PC-9 (cell line): ENCODE measurements at regions of chr15 and their contacts with region 1.

Region 1: GRCh38 chr15:44738340-44738984 is 2.1 kb downstream of the TRIM69 start:
- DNase-seq: peak in 1 of 2 experiments; percentile 37
- H3K4me3 ChIP-seq: no peak overlapping the region
- H3K27ac ChIP-seq: no peak overlapping the region
- H3K4me1 ChIP-seq: no peaks in the 10 kb centered on the region
- H3K27me3 ChIP-seq: no peaks in the 10 kb centered on the region
- CTCF ChIP-seq: peak; percentile 75

Region 2: GRCh38 chr15:44573386-44573785 is 165.1 kb before region 1 on chr15:
- CTCF ChIA-PET with region 1: no interaction called
- POLR2A ChIA-PET with region 1: no interaction called
- intact Hi-C with region 1: loop called (anchors 1 kb)
- DNase-seq: no peak
- H3K4me3 ChIP-seq: no peak overlapping the region
- H3K27ac ChIP-seq: no peak overlapping the region
- H3K4me1 ChIP-seq: no peaks in the 10 kb centered on the region
- H3K27me3 ChIP-seq: no peaks in the 10 kb centered on the region
- CTCF ChIP-seq: no peak

Region 3: GRCh38 chr15:44584162-44584749 is 154.2 kb before region 1 on chr15:
- CTCF ChIA-PET with region 1: interaction called, 15 read pairs
- POLR2A ChIA-PET with region 1: no interaction called
- intact Hi-C with region 1: no loop called
- DNase-seq: peak; percentile 39 to 54
- H3K4me3 ChIP-seq: no peak overlapping the region
- H3K27ac ChIP-seq: no peak overlapping the region
- H3K4me1 ChIP-seq: peaks cover 11% of the 10 kb centered on the region; the same call in 1 of the 2 replicates
- H3K27me3 ChIP-seq: no peaks in the 10 kb centered on the region
- CTCF ChIP-seq: peak; percentile 51

Region 4: DNA sequence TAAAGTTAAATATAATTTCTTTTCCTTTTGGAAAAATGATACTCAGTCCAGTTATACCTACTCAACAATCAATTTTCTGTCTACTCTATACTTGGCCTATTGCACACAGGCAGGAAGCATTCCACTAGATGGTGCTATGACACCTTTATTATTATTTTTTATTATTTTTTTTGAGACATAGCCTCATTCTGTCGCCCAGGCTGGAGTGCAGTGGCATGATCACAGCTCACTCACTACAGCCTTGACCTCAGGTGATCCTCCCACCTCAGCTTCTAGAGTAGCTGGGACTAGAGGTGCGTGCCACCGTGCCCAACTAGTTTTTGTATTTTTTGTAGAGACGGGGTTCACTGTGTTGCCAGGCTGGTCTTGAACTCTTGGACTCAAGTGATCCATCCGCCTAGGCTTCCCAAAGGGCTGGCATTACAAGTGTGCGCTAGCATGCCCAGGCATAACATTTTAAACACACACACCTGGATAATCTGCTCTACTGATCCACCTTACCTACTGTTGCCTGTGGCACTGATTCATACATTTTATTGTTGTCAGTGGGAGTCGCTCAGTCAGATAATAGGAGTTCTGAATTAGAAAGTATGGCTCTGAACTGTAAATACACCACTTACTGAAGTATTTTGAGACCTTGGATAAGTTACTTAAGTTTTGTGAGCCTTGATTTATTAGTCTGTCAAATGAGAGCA is 145.3 kb before region 1 on chr15:
- CTCF ChIA-PET with region 1: interaction called, 4 read pairs
- POLR2A ChIA-PET with region 1: no interaction called
- intact Hi-C with region 1: loop called (anchors 5 kb)
- DNase-seq: no peak
- H3K4me3 ChIP-seq: no peak overlapping the region
- H3K27ac ChIP-seq: no peak overlapping the region
- H3K4me1 ChIP-seq: peaks cover 12% of the 10 kb centered on the region
- H3K27me3 ChIP-seq: no peaks in the 10 kb centered on the region
- CTCF ChIP-seq: peak; percentile 48

Region 5: DNA sequence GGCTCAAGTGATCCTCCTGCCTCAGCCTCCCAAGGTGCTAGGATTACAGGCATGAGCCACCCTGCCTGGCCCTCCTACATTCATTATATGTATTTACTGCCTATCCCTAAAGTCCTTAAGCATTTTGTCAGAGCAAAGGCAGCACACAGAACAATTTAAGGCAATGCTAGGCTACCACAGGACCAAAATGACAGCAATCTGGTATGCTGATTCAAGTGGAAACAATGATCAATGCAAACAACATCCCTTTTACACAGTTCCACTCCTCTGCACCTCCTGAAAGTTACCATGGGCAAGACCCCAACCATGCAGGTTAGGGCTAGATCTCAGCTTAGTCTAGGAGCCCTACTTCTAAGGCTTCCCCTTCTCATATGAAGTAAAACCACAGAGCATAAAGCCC is 115.3 kb before region 1 on chr15:
- CTCF ChIA-PET with region 1: interaction called, 12 read pairs
- POLR2A ChIA-PET with region 1: no interaction called
- intact Hi-C with region 1: no loop called
- DNase-seq: no peak
- H3K4me3 ChIP-seq: no peak overlapping the region
- H3K27ac ChIP-seq: no peak overlapping the region
- H3K4me1 ChIP-seq: no peaks in the 10 kb centered on the region
- H3K27me3 ChIP-seq: no peaks in the 10 kb centered on the region
- CTCF ChIP-seq: no peak

Region 6: DNA sequence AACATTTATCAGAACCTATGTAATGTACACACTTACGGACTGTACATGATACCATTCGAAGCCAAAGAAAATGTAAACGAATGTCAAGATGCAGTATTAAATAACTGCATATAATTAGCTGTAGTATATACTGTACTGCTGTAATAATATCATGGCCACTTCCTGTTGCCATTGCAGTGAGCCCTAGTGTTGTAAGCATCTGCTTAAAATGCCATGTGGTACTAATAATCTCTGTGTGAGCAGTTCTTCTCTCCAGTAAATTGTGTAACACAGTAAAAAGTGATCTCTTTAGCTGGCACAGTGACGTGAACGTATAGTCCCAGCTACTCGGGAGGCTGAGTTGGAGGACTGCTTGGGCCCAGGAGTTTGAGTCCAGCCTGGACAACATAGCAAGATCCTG is 83.6 kb before region 1 on chr15:
- CTCF ChIA-PET with region 1: interaction called, 21 read pairs
- POLR2A ChIA-PET with region 1: interaction called, 9 read pairs
- intact Hi-C with region 1: no loop called
- DNase-seq: no peak
- H3K4me3 ChIP-seq: no peak overlapping the region
- H3K27ac ChIP-seq: no peak overlapping the region
- H3K4me1 ChIP-seq: no peaks in the 10 kb centered on the region
- H3K27me3 ChIP-seq: no peaks in the 10 kb centered on the region
- CTCF ChIP-seq: no peak

Region 7: GRCh38 chr15:44663409-44664308 is 74.8 kb before region 1 on chr15 and contains the start of gene SPG11:
- CTCF ChIA-PET with region 1: interaction called, 26 read pairs
- POLR2A ChIA-PET with region 1: no interaction called
- intact Hi-C with region 1: loop called (anchors 2 kb)
- DNase-seq: peak; percentile 87 to 96
- H3K4me3 ChIP-seq: peak within 1 kb of the TSS; percentile 75
- H3K27ac ChIP-seq: peak within 1 kb of the TSS; percentile 78
- H3K4me1 ChIP-seq: peaks cover 13% of the 10 kb centered on the region
- H3K27me3 ChIP-seq: no peaks in the 10 kb centered on the region
- CTCF ChIP-seq: peak; percentile 80
- total RNA-seq, gene SPG11: 63.2 and 64.2 TPM in 2 replicates